HepG2 (cell line): ENCODE measurements at regions of chr3 and their contacts with region 1.

Region 1: GRCh38 chr3:27960133-27960532 is 238.0 kb upstream of the EOMES start:
- DNase-seq: no peak
- ATAC-seq: no peak
- H3K4me3 ChIP-seq: no peak overlapping the region
- H3K27ac ChIP-seq: no peak overlapping the region
- H3K4me1 ChIP-seq: no peaks in the 10 kb centered on the region
- H3K27me3 ChIP-seq: no peaks in the 10 kb centered on the region
- CTCF ChIP-seq: no peak
- EP300 ChIP-seq: no peak
- POLR2A ChIP-seq: no peak
- RAD21 ChIP-seq: no peak

Region 2: DNA sequence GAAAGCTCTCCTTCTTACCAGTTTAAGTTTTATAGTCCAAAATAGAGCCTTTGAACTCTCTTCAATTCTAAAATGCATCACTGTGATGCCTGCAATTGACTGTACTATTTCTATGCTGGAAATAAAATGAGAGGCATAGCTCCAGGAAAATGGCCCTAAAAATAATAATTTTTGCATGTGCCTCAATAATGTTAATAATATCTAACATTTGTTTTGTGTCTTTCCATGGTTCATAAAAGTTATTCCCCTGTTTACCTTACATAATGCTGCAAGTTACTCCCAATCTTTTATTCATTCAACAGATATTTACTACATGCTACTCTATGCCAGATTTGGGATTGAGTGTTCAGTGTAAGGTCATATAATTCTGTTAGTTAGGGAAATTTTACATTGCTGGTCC is 1894.7 kb after region 1 on chr3:
- CTCF ChIA-PET with region 1: no interaction called
- POLR2A ChIA-PET with region 1: no interaction called
- in situ Hi-C with region 1: no loop called
- intact Hi-C with region 1: loop called (anchors 5 kb)
- DNase-seq: no peak
- ATAC-seq: no peak
- H3K4me3 ChIP-seq: no peak overlapping the region
- H3K27ac ChIP-seq: no peak overlapping the region
- H3K4me1 ChIP-seq: no peaks in the 10 kb centered on the region
- H3K27me3 ChIP-seq: no peaks in the 10 kb centered on the region; a peak in 1 of 5 replicates
- CTCF ChIP-seq: no peak
- EP300 ChIP-seq: no peak
- POLR2A ChIP-seq: no peak
- RAD21 ChIP-seq: no peak